A549 (cell line): ENCODE measurements at regions of chr11 and their contacts with region 1.

Region 1: DNA sequence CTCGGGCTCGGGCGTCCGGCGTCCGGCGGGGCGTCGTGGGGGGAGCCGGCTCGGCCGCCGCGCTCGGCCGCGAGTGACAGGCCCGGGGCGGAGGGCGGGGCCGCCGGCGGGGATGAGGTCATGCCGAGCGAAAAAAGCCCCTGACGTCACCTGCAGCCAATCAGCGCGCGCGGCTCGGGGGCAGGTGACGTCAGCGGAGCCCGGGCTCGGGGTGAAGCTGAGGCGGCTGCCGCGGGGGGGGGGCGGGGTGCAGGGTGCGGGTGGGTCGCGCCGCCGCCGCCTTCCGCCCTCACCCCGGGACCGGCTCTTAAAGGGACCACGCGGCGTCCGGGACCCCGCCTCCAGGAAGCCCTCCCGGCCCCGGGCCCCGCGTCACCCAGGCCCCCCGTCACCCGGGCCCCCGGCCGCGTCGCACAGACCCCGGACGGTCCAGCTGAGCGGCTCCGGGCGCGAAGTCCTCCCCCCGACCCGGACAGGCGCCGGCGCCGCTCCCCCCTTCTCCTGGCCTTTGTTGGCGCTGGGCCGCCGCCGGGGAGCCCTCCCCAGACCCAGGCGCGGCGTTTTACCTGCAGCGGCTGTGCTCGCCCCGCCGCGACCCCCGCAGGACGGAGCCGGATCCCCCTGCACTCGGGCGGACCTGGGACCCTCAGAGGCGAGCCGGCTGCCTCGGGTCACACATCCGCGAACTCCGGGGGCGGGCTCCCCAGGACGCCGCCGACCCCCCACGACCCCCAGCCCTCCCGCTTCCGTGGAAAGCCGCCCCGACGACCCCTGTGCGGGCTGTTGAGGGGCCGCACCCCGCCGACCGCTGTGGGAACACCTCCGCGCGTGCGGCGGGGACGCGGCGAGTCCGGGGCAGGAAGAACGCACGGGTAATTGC is at the start of gene DUSP8:
- DNase-seq: peak; percentile 87 to 90
- ATAC-seq: peak; percentile 13 to 35
- H3K4me3 ChIP-seq: peak within 1 kb of the TSS; percentile 74
- H3K27ac ChIP-seq: peak within 1 kb of the TSS; percentile 89 to 95
- H3K4me1 ChIP-seq: peaks cover 37% of the 10 kb centered on the region
- CTCF ChIP-seq: no peak
- EP300 ChIP-seq: peak in 1 of 2 experiments; percentile 23; a peak in 1 of 5 replicates
- POLR2A ChIP-seq: no peak
- RAD21 ChIP-seq: no peak
- polyA plus RNA-seq, gene DUSP8: 2.6 and 3.6 TPM in 2 replicates

Region 2: DNA sequence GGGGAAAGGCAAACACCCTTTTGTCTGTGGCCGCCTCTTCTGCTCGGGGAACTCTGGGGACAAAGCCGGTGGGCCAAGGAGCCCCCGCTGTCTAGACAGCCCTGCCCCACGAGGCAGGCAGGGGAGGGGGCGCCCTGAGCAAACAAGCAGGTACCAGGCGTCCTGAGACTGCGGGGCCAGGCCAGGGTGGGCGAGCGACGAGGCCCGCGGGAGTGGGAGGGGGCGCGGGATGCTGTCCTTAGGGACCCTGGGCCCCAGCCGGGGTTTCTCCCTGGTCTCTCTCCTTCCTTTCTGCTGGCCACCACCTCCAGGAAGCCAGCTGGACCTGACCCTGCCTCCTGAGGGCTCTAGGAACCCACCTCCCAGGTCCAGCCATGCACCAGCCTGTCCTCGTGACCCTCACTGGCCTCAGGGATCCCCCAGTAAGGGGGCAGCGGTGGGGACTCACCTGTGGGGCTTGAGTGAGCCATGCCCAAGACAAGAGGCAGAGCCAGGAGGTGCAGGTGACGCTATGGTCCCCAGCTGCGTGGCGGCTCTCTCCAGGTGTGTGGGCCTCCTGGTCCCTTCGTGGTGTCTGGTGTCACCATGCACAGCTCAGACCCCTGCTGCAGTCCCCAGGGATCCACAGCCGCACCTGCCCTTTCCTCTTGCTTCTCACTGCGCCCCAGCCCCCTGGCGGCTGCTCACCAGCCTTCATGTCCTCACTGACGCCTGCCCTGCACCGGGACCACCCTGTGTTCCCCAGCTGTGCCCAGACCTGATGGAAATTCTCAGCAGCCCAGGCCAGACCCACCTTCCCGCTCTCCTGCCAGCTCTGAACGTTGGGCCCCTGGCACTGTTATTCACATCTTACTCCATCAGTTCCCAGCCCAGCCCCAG is 441.2 kb before region 1 on chr11:
- CTCF ChIA-PET with region 1: no interaction called
- POLR2A ChIA-PET with region 1: no interaction called
- DNase-seq: no peak
- ATAC-seq: no peak
- H3K4me3 ChIP-seq: no peak overlapping the region
- H3K27ac ChIP-seq: 0 out of 6 replicates have a peak overlapping the region, but pooled peaks of 1 of the 2 experiments have one; percentile 34
- H3K4me1 ChIP-seq: no peaks in the 10 kb centered on the region
- CTCF ChIP-seq: no peak
- EP300 ChIP-seq: no peak
- POLR2A ChIP-seq: no peak
- RAD21 ChIP-seq: no peak

Region 3: GRCh38 chr11:1515082-1516060 is 57.1 kb before region 1 on chr11:
- CTCF ChIA-PET with region 1: interaction called, 20 read pairs
- POLR2A ChIA-PET with region 1: no interaction called
- DNase-seq: peak; percentile 52 to 93
- ATAC-seq: peak; percentile 76 to 96
- H3K4me3 ChIP-seq: no peak overlapping the region
- H3K27ac ChIP-seq: peak overlapping the region in 1 of 2 experiments; percentile 54; a peak in 2 of 6 replicates
- H3K4me1 ChIP-seq: peaks cover 7% of the 10 kb centered on the region; the same call in 1 of the 3 replicates
- CTCF ChIP-seq: peak; percentile 80
- EP300 ChIP-seq: no peak
- POLR2A ChIP-seq: no peak
- RAD21 ChIP-seq: peak; percentile 83 to 84

Region 4: DNA sequence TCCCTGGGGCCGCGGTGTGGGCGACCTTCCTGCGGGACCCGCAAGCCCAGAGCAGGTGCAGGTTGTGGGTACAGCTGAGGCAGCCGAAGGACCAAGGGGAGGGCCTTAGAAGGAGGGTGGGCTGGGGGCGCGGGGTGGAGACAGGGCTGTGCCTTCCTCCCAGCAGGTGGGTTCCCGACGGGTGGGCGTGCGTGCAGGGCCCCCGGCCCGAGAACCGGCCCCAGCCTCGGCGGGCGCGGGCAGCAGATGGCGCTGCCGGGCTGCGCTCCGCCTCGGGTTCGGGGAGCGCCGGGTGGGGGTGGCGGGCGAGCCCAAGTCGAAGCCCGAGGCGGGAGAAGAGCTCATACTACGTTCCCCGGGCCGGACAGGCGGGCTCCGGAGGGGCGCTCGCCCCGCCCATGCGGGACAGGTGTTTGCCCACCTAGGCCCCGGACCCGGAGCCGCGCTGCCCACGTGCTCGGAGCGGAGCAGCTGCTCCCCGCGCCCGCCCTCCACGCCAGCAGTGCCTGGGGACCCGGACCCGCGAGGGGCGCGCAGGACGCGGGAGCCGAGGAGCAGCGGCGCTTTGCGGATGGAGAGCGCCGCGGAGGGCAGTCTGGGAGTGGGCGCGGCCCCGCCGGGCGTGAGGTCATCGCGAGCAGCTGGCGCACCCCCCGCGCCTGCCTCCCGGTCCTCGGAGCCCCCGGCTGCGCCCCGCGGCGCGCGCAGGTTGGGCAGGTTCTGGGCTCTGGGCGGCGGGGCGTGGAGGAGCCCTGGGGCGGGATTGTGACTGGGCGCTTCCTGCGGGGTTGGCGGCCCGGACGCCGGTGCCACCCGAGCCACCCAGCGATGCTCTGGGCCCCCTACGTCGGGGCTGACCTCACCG is 25.7 kb before region 1 on chr11:
- CTCF ChIA-PET with region 1: interaction called, 719 read pairs
- POLR2A ChIA-PET with region 1: interaction called, 5 read pairs
- DNase-seq: peak; percentile 58 to 84
- ATAC-seq: peak; percentile 60 to 83
- H3K4me3 ChIP-seq: peak overlapping the region; percentile 63
- H3K27ac ChIP-seq: peak overlapping the region; percentile 74 to 86
- H3K4me1 ChIP-seq: peaks cover 21% of the 10 kb centered on the region
- CTCF ChIP-seq: peak; percentile 93
- EP300 ChIP-seq: no peak
- POLR2A ChIP-seq: no peak
- RAD21 ChIP-seq: peak; percentile 77 to 98

Region 5: GRCh38 chr11:1559119-1559951 is 13.1 kb before region 1 on chr11:
- CTCF ChIA-PET with region 1: interaction called, 62 read pairs
- POLR2A ChIA-PET with region 1: interaction called, 4 read pairs
- DNase-seq: peak; percentile 65 to 74
- ATAC-seq: peak; percentile 41 to 45
- H3K4me3 ChIP-seq: peak overlapping the region; percentile 21; the same call in 2 of the 3 replicates
- H3K27ac ChIP-seq: peak overlapping the region; percentile 86 to 90
- H3K4me1 ChIP-seq: peaks cover 57% of the 10 kb centered on the region
- CTCF ChIP-seq: no peak
- EP300 ChIP-seq: peak in 1 of 2 experiments; percentile 31; a peak in 2 of 5 replicates
- POLR2A ChIP-seq: no peak
- RAD21 ChIP-seq: no peak

Region 6: GRCh38 chr11:1592628-1593027 is 20.2 kb after region 1 on chr11:
- CTCF ChIA-PET with region 1: interaction called, 48 read pairs
- POLR2A ChIA-PET with region 1: no interaction called
- DNase-seq: no peak
- ATAC-seq: no peak
- H3K4me3 ChIP-seq: no peak overlapping the region
- H3K27ac ChIP-seq: no peak overlapping the region
- H3K4me1 ChIP-seq: peaks cover 15% of the 10 kb centered on the region
- CTCF ChIP-seq: no peak
- EP300 ChIP-seq: no peak
- POLR2A ChIP-seq: no peak
- RAD21 ChIP-seq: no peak

Region 7: GRCh38 chr11:1694064-1694845 is 121.8 kb after region 1 on chr11:
- CTCF ChIA-PET with region 1: no interaction called
- POLR2A ChIA-PET with region 1: no interaction called
- DNase-seq: peak; percentile 80 to 88
- ATAC-seq: peak; percentile 82 to 95
- H3K4me3 ChIP-seq: peak overlapping the region; percentile 62
- H3K27ac ChIP-seq: peak overlapping the region; percentile 87 to 92
- H3K4me1 ChIP-seq: no peaks in the 10 kb centered on the region
- CTCF ChIP-seq: peak; percentile 88
- EP300 ChIP-seq: no peak
- POLR2A ChIP-seq: no peak
- RAD21 ChIP-seq: peak; percentile 94 to 99